ENCODE measurements at regions of chr1 and their contacts with region 1.

Region 1: DNA sequence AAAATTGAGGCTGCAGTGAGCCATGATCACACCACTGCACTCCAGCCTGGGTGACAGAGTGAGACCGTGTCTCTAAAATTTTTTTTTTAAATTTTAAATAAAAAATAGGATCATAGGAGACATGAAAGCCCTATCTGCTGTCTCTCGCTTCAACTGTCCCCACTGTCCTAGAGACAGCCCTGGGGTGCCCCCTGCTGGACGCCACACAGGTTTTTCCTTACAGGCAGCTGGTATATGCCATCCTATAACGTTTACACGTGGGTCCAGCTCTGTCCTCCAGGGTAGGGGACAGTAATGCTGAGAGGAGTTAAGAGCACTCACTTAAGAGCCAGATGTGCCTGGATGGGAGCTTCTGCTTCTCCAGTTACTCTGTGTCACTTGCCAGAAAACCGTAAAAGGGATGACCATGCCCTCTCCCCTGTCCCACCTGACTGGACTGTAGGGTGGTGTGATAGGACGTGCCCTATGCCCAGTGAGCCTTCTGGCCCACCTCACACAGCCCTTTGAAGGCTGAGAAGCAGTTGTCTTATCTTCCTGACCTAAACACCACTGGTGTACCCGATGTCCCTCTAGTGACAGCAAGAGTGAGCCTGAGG is 8.5 kb downstream of the FBXO2 start:
- DNase-seq: peak in 3 of 4 donors; percentile 75 to 94 (median 76)
- ATAC-seq: peak; percentile 46
- H3K4me3 ChIP-seq: no peak overlapping the region
- H3K27ac ChIP-seq: no peak overlapping the region
- H3K4me1 ChIP-seq: peaks cover 0 to 23% of the 10 kb centered on the region in 2 donors
- H3K27me3 ChIP-seq: peaks cover 11 to 37% of the 10 kb centered on the region in 2 donors
- CTCF ChIP-seq: peak; percentile 79 to 84

Region 2: DNA sequence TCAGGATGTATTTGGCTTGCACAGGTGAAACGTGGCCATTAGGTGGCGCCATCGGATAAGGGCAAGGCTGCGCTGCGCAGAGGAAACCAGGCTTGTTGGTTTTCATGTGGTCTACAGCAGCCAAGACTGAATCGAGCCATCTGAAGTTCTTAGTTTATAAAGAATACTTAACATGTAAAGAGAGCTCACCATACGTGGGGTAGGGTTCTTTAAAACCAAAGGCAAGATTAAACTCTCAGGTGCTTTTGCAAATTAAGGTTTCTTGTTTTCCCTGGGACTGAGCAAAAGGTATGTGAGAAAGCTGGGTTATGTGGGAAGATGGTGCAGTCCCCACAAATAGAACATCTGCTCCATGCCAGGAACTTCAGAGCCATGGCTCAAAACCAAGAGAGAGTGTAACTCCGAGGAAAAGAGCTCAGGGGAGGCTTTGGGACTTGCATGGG is 608.0 kb before region 1 on chr1:
- intact Hi-C with region 1: loop called in 1 of 2 experiments (anchors 10 kb)
- DNase-seq: peak; percentile 84 to 92 (median 88)
- ATAC-seq: peak; percentile 99
- H3K4me3 ChIP-seq: no peak overlapping the region
- H3K27ac ChIP-seq: no peak overlapping the region
- H3K4me1 ChIP-seq: peaks cover 0 to 4% of the 10 kb centered on the region in 2 donors
- H3K27me3 ChIP-seq: peaks cover 0 to 11% of the 10 kb centered on the region in 2 donors
- CTCF ChIP-seq: peak; percentile 93 to 94

Region 3: DNA sequence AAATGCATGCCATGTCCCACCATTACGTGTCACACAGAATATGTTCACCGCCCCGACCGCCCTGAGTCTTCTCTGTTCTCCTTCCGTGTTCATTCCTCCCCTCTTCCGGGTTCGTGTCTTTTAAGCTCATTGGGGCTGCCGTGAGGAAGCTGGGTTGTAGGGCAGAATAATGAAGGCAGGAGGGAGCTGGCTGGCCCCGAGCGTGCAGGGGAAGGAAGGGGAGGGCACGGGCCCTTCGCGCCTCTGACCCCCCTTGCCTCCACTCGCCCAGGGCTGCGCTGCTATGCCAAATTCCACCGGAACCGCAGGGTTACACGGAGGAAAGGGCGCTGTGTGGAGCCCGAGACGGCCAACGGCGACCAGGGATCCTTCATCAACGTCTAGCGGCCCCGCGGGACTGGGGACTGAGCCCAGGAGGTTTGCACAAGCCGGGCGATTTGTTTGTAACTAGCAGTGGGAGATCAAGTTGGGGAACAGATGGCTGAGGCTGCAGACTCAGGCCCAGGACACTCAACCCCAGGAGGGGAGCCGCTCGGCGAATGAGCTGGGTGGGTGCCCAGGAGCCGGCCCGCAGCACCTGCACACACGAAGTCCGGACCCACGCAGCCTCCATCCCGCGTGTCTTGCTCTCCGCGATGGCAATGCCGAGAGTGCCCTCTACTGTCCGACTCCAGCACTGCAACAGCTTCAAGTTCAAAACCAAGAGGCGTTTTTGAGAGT is 73.7 kb after region 1 on chr1:
- intact Hi-C with region 1: loop called in 1 of 2 experiments (anchors 5 kb)
- DNase-seq: peak in 3 of 4 donors; percentile 80 to 91 (median 86)
- ATAC-seq: peak; percentile 96
- H3K4me3 ChIP-seq: peak overlapping the region; percentile 22 to 50
- H3K27ac ChIP-seq: peak overlapping the region in 1 of 2 donors; percentile 95
- H3K4me1 ChIP-seq: peaks cover 0 to 32% of the 10 kb centered on the region in 2 donors
- H3K27me3 ChIP-seq: no peaks in the 10 kb centered on the region
- CTCF ChIP-seq: peak; percentile 94 to 95

Measured in left lung (tissue), 14 donors.